Stomach (tissue), 19 donors: ENCODE measurements at regions of chr4 and their contacts with region 1.

Region 1: DNA sequence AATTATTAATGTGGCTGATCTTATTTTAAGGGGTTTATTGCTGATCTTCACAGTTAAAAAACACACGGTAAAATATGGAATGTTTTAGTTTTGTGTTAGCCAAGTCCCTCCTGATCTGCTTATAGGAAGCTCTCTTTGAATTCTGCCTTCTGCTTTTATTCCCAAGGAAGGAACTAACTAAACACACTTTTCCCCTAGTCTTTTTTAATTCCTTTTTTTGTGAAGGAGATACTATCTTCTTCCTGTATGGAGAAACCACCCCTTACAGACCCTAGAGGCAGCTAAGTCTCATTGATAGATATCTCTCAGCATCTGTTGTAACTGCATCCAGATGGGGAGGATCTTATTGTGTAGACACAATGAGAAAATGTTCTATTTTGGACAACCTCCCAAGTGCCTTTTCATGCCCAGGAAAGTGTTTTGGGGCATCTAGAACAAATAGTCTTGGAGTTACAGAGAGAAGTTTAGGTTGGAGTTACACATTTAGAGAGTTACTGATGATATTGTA is 64.4 kb downstream of the AFF1 start:
- DNase-seq: no peak
- H3K4me3 ChIP-seq: no peak overlapping the region
- H3K27ac ChIP-seq: peak overlapping the region in 2 of 5 donors; percentile 21 to 55
- H3K4me1 ChIP-seq: peaks cover under 1 to 30% (median 19%) of the 10 kb centered on the region in 4 donors
- H3K27me3 ChIP-seq: no peaks in the 10 kb centered on the region
- CTCF ChIP-seq: no peak
- EP300 ChIP-seq: no peak
- POLR2A ChIP-seq: no peak

Region 2: GRCh38 chr4:86939729-86940575 is 59.2 kb before region 1 on chr4:
- intact Hi-C with region 1: loop called (anchors 10 kb)
- DNase-seq: peak in 1 of 2 donors; percentile 31
- H3K4me3 ChIP-seq: peak overlapping the region in 1 of 4 donors; percentile 28
- H3K27ac ChIP-seq: peak overlapping the region; percentile 2 to 100 (median 97)
- H3K4me1 ChIP-seq: peaks cover 52 to 89% (median 74%) of the 10 kb centered on the region in 4 donors
- H3K27me3 ChIP-seq: no peaks in the 10 kb centered on the region
- CTCF ChIP-seq: no peak
- EP300 ChIP-seq: no peak
- POLR2A ChIP-seq: no peak

Region 3: DNA sequence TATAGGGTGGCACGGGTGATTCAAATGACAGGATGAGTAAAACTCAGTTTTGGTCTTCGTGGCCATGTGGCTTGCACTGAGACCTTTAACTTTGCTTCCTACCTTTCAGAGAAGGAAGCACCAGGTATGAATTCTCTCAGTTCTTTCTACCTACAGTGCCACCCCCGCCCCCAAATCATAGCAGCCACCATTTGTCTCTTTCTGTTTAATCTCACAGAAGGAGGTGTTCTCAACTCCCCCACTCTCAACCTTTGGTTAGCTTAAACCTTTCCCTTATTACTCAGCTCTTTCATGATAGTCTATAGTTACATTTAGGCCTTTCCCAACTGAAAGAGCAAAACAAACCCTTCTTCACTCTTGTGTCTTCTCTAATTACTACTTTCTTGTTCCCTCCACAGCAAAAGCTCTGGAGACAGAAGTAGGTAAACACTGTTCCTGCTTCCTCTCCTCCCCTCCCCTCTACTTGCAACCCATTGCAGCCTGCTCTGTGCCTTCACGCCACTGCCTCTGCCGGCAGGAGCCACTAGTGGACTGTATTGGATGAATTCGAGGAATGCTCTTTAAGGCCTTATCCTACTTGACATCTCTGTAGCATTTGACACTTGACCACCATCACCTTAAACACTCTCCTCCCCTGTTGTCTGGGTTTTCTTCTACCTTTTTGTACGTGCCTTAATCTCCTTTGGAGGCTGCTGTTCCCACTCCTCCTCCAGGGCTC is 59.3 kb after region 1 on chr4:
- intact Hi-C with region 1: no loop called
- DNase-seq: peak in 1 of 2 donors; percentile 57
- H3K4me3 ChIP-seq: no peak overlapping the region
- H3K27ac ChIP-seq: peak overlapping the region in 4 of 5 donors; percentile 30 to 66 (median 62)
- H3K4me1 ChIP-seq: peaks cover 43 to 78% (median 55%) of the 10 kb centered on the region in 4 donors
- H3K27me3 ChIP-seq: no peaks in the 10 kb centered on the region
- CTCF ChIP-seq: no peak
- EP300 ChIP-seq: no peak
- POLR2A ChIP-seq: no peak

Region 4: DNA sequence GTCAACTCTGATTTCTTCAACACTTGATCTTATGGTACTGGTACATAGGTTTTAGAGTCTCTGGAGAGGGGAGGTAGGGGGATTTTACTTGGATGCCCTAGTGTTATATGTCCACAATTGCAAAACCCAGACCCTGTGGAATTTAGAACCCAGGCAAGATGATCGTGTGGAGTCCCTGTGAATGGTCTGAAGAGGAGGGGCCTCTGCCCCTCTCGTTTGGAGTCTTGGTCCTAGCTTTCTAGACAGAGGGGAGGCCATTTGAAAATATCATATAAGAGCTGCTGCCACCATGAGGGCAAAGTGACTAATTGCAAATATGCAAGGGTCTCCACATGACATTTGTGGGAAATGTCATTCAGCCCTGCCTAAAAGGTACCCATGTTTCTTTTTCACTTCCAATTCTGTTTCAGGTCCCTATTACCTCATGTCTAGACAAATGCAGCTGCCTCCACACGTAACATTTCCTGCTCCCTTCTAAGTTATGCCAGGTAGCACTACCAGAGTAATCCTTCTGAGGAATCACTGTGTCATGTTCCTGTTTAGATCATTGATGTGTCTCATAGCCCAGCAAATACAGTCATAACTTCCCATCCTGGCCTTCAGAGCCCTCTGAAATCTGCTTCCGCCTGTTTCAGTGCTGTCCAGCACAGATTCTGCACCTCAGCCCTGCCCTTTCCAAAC is 94.4 kb after region 1 on chr4:
- intact Hi-C with region 1: loop called (anchors 10 kb)
- DNase-seq: peak in 1 of 2 donors; percentile 75
- H3K4me3 ChIP-seq: no peak overlapping the region
- H3K27ac ChIP-seq: peak overlapping the region in 2 of 5 donors; percentile 28 to 70
- H3K4me1 ChIP-seq: peaks cover 8 to 38% (median 22%) of the 10 kb centered on the region in 4 donors
- H3K27me3 ChIP-seq: no peaks in the 10 kb centered on the region
- CTCF ChIP-seq: peak in 5 of 7 experiments; percentile 34 to 71 (median 57)
- EP300 ChIP-seq: no peak
- POLR2A ChIP-seq: no peak